ENCODE measurements at regions of chr1 and their contacts with region 1.

Region 1: GRCh38 chr1:44213222-44214112 is at the start of gene DMAP1:
- DNase-seq: peak; percentile 7
- H3K4me3 ChIP-seq: peak within 1 kb of the TSS; percentile 52
- H3K27me3 ChIP-seq: no peaks in the 10 kb centered on the region
- CTCF ChIP-seq: peak; percentile 7; the same call in 1 of the 2 replicates
- polyA plus RNA-seq, gene DMAP1: 32.4 and 45.1 TPM in 2 replicates

Region 2: GRCh38 chr1:44049839-44050238 is 163.6 kb before region 1 on chr1:
- CTCF ChIA-PET with region 1: interaction called, 10 read pairs
- POLR2A ChIA-PET with region 1: no interaction called
- DNase-seq: peak; percentile 87
- H3K4me3 ChIP-seq: no peak overlapping the region
- H3K27me3 ChIP-seq: no peaks in the 10 kb centered on the region
- CTCF ChIP-seq: no peak

Region 3: GRCh38 chr1:44227211-44227610 is 13.7 kb after region 1 on chr1:
- CTCF ChIA-PET with region 1: interaction called, 46 read pairs
- POLR2A ChIA-PET with region 1: no interaction called
- DNase-seq: no peak
- H3K4me3 ChIP-seq: no peak overlapping the region
- H3K27me3 ChIP-seq: no peaks in the 10 kb centered on the region
- CTCF ChIP-seq: no peak

Region 4: DNA sequence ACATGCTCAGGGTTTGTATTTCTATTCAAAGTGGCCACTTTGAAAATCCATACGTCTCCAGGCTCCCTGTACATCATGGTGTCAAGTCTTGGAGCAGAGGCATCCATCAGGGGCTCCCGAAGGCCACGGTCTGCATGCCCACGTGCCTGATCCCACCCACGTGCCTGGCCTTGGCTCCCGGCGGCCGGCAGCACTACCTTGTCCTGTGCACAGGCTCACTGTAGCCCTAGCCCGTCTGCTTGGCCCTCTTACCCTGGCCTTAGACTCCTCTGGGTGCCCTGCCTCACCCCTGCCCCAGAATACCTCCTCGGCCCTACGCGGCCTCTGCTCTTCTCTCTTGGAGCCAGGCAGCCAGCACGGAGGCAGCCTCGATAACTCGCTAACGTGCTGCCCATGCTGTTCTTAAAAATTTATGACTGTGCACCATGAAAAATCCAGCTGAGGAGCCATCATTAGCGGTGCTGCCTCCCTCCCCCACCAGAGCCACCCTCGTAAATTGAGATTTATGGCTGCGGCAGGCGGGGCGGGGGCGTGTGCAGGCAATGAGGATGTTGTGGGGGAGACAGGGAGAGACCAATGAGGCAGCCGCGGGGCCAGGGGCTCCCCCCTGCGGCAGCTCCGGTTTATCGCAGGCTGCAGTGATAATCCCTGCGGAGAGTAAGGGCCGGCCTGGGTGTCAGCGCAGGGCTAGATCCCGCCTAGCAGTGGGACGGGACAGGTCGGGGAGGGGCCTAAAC is 24.4 kb after region 1 on chr1:
- CTCF ChIA-PET with region 1: interaction called, 88 read pairs
- POLR2A ChIA-PET with region 1: no interaction called
- DNase-seq: peak; percentile 52
- H3K4me3 ChIP-seq: no peak overlapping the region
- H3K27me3 ChIP-seq: no peaks in the 10 kb centered on the region
- CTCF ChIP-seq: peak; percentile 91

Region 5: DNA sequence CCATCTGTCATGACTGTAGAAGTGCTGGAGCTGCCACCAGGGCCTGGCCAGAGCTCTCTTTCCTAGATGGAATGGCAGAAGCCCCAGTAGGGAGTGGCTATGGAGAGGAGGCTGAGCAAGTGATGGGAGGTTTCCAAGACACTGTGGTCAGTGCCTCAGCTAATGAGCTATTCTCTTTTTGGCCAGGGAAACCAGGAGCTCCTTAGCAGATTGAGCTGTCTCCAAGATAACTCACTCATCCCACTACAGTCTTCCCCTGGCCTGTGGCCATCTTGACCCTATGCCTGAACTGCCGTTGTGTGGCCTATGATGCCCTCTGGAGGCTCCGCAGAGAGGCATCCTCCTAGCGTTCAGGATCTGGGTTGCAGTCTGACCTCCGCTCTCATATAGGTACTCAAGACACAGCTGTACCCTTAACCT is 81.1 kb after region 1 on chr1:
- CTCF ChIA-PET with region 1: interaction called, 85 read pairs
- POLR2A ChIA-PET with region 1: no interaction called
- DNase-seq: peak; percentile 46
- H3K4me3 ChIP-seq: no peak overlapping the region
- H3K27me3 ChIP-seq: no peaks in the 10 kb centered on the region
- CTCF ChIP-seq: peak; percentile 52

Region 6: GRCh38 chr1:44318097-44319088 is 104.9 kb after region 1 on chr1:
- CTCF ChIA-PET with region 1: interaction called, 11 read pairs
- POLR2A ChIA-PET with region 1: no interaction called
- DNase-seq: no peak
- H3K4me3 ChIP-seq: no peak overlapping the region
- H3K27me3 ChIP-seq: no peaks in the 10 kb centered on the region
- CTCF ChIP-seq: peak; percentile 83

Region 7: GRCh38 chr1:44375547-44375946 is 162.1 kb after region 1 on chr1:
- CTCF ChIA-PET with region 1: no interaction called
- POLR2A ChIA-PET with region 1: no interaction called
- DNase-seq: no peak
- H3K4me3 ChIP-seq: no peak overlapping the region
- H3K27me3 ChIP-seq: peaks cover 11% of the 10 kb centered on the region
- CTCF ChIP-seq: no peak